ENCODE measurements at regions of chr17 and their contacts with region 1.

Region 1: DNA sequence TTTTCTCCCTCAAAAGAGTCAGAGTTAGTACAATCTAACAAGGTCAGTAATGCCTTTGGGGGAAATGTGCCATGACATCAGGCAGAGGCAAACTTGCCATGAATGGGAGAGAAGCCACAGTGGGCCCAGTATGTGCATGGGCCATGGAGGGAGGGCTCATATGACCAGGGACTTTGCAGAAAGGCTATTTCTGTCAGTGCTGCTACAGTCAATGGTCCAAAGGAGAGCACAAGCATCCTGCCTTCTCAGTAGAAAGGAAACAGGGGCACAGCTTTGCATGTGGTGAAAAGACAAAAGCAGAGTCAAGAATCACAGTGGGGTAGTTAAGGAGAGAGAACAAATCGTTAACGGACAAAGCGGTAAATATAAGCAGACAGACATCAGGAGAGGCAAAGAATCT is 11.2 kb upstream of the CORO6 start:
- DNase-seq: no peak
- H3K4me3 ChIP-seq: no peak overlapping the region
- H3K27ac ChIP-seq: no peak overlapping the region
- H3K4me1 ChIP-seq: no peaks in the 10 kb centered on the region
- H3K27me3 ChIP-seq: no peaks in the 10 kb centered on the region
- CTCF ChIP-seq: no peak
- EP300 ChIP-seq: no peak
- POLR2A ChIP-seq: no peak

Region 2: GRCh38 chr17:29699283-29699682 is 65.4 kb after region 1 on chr17:
- in situ Hi-C with region 1: no loop called
- intact Hi-C with region 1: no loop called
- DNase-seq: no peak
- H3K4me3 ChIP-seq: no peak overlapping the region
- H3K27ac ChIP-seq: peak overlapping the region in 2 of 4 donors; percentile 6 to 27
- H3K4me1 ChIP-seq: peaks cover 0 to 18% (median 4%) of the 10 kb centered on the region in 4 donors
- H3K27me3 ChIP-seq: no peaks in the 10 kb centered on the region
- CTCF ChIP-seq: no peak
- EP300 ChIP-seq: no peak
- POLR2A ChIP-seq: no peak

Region 3: GRCh38 chr17:29771551-29771950 is 137.7 kb after region 1 on chr17:
- in situ Hi-C with region 1: loop called in 3 of 4 experiments (anchors 10 to 25 kb)
- intact Hi-C with region 1: no loop called
- DNase-seq: no peak
- H3K4me3 ChIP-seq: no peak overlapping the region
- H3K27ac ChIP-seq: no peak overlapping the region
- H3K4me1 ChIP-seq: no peaks in the 10 kb centered on the region
- H3K27me3 ChIP-seq: no peaks in the 10 kb centered on the region
- CTCF ChIP-seq: no peak
- EP300 ChIP-seq: no peak
- POLR2A ChIP-seq: no peak

Region 4: GRCh38 chr17:29844339-29845048 is 210.6 kb after region 1 on chr17:
- in situ Hi-C with region 1: no loop called
- intact Hi-C with region 1: no loop called
- DNase-seq: no peak
- H3K4me3 ChIP-seq: no peak overlapping the region
- H3K27ac ChIP-seq: no peak overlapping the region
- H3K4me1 ChIP-seq: peaks cover 0 to 5% (median 2%) of the 10 kb centered on the region in 4 donors
- H3K27me3 ChIP-seq: no peaks in the 10 kb centered on the region
- CTCF ChIP-seq: no peak
- EP300 ChIP-seq: no peak
- POLR2A ChIP-seq: no peak

Measured in transverse colon (tissue), 4 donors.